ENCODE measurements at regions of chr19 and their contacts with region 1.

Region 1: DNA sequence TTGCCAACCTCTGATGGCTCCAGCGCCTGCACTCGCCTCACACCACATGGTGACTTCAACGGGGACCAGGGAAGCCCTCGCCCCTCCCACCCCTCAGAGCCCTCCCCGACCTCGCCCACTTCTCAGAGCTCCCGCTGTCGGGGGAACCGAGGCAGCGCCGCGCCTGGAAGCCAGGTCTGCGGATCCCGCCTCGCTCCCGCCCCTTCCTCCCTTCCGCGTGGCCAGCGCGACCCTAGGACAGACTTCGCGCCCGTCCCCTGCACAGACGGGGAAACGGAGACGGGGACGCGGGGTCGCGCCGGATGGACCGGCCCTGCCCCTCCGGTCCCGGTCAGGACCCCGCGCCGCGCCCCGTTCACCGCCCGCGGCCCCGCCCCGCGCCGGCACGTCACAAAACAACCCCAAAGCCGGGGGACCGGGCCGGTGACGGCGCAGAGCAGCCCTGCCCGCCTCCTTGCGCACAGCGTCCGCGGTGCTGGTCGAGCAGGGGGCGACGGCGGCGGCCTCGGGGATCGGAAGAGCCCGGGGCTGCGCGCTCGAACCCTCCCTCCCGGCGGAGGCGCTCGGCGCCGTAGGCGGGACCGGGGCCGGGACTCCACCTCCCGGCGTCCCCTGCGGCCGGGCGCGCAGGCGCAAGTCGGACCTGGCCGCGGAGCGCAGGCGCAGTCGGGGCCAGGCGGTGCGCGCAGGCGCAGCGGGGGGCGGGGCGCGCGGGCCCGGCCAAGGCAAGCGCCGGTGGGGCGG is 379 bp upstream of the CDC34 start:
- DNase-seq: peak; percentile 92
- H3K4me3 ChIP-seq: peak overlapping the region; percentile 100
- H3K27ac ChIP-seq: peak overlapping the region; percentile 95
- H3K4me1 ChIP-seq: peaks cover 13% of the 10 kb centered on the region
- H3K27me3 ChIP-seq: no peaks in the 10 kb centered on the region
- CTCF ChIP-seq: no peak; the same call in 1 of the 2 replicates

Region 2: DNA sequence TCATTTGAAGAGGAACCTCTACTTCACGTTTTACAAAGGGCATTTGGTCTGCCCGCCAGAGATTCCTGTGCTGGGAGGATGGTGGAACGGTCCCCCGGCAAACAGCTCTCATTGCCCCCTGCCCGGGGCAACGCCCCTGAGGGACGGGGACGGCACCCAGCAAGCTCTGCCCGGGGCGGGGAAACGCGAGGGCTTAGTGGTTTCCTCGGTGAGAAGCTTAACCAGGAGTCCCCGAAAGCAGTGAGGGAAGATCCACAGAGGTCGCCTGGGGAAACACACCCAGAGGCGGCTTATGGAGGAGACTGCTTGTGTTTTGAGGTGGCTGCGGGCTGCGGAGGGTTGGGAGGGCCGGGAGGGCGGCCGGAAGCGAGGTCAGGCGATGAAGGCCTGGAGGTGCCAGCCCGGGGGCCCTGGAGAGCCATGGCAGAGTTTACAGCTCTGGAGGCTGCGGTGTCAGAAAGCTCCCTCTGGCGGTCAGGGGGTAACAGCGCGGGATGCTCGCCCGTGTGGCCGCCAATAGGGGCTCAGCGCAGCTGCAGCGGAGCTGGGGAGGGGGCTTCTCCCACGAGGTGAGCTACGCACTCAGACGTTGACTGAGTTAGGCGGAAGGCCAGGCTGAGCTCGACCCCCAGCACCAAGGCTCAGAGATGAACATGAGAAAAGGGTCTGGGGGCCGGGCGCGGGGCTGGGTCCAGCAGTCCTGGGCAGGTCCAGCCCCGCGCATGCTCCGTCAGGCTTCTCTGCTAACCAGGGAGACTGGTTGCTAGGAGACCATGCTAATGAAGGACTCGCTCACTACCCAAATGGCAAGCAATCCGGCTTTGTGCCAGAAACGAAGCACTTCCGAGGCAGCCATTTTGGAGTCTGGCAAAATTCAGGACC is 24.5 kb before region 1 on chr19:
- CTCF ChIA-PET with region 1: interaction called, 16 read pairs
- POLR2A ChIA-PET with region 1: interaction called, 11 read pairs
- intact Hi-C with region 1: no loop called
- DNase-seq: peak; percentile 93
- H3K4me3 ChIP-seq: peak overlapping the region; percentile 82
- H3K27ac ChIP-seq: peak overlapping the region; percentile 96
- H3K4me1 ChIP-seq: peaks cover 25% of the 10 kb centered on the region
- H3K27me3 ChIP-seq: no peaks in the 10 kb centered on the region
- CTCF ChIP-seq: peak; percentile 99

Region 3: DNA sequence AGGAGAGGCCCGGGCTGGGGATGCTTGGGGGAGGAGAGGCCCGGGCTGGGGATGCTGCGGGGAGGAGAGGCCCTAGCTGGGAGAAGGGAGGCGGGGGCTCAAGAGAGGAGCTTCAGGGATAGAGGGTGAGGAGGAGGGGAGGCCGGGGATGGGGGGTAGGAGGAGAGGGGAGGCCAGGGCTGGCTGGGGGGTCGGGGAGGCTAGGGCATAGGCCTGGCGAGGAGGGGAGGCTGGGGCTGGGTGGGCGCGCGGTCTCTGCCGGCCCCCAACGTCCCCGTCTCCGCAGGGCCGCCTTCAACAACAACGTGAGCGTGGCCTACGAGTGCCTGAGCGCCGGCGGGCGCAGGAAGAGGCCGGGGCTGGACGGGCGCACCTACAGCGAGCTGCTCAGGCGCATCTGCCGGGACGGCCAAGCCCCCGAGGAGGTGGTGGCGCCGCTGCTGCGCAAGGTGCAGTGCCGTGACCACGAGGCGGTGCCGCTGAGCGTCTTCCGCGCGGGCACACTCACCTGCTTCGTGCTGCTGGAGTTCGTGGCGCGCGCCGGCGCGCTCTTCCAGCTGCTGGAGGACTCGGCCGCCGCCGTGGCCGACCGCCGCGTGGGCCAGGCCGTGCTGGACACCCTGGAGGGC is 12.5 kb before region 1 on chr19:
- CTCF ChIA-PET with region 1: no interaction called
- POLR2A ChIA-PET with region 1: no interaction called
- intact Hi-C with region 1: no loop called
- DNase-seq: no peak
- H3K4me3 ChIP-seq: no peak overlapping the region
- H3K27ac ChIP-seq: no peak overlapping the region
- H3K4me1 ChIP-seq: peaks cover 4% of the 10 kb centered on the region
- H3K27me3 ChIP-seq: no peaks in the 10 kb centered on the region
- CTCF ChIP-seq: no peak

Region 4: GRCh38 chr19:572140-572742 is 41.1 kb after region 1 on chr19 and contains the start of gene BSG:
- CTCF ChIA-PET with region 1: no interaction called
- POLR2A ChIA-PET with region 1: no interaction called
- intact Hi-C with region 1: loop called (anchors 5 kb)
- DNase-seq: peak; percentile 99
- H3K4me3 ChIP-seq: peak within 1 kb of the TSS; percentile 99
- H3K27ac ChIP-seq: peak within 1 kb of the TSS; percentile 97
- H3K4me1 ChIP-seq: peaks cover 20% of the 10 kb centered on the region
- H3K27me3 ChIP-seq: no peaks in the 10 kb centered on the region
- CTCF ChIP-seq: no peak
- total RNA-seq, gene BSG: 865 TPM in 2 replicates

Region 5: GRCh38 chr19:1652471-1653299 is 1121.5 kb after region 1 on chr19 and contains the start of gene TCF3:
- CTCF ChIA-PET with region 1: interaction called, 28 read pairs
- POLR2A ChIA-PET with region 1: no interaction called
- intact Hi-C with region 1: no loop called
- DNase-seq: peak; percentile 99
- H3K4me3 ChIP-seq: peak within 1 kb of the TSS; percentile 83
- H3K27ac ChIP-seq: peak within 1 kb of the TSS; percentile 100
- H3K4me1 ChIP-seq: peaks cover 15% of the 10 kb centered on the region
- H3K27me3 ChIP-seq: no peaks in the 10 kb centered on the region
- CTCF ChIP-seq: no peak
- total RNA-seq, gene TCF3: 333 and 361 TPM in 2 replicates

Measured in A673 (cell line).